Activated T-helper 1 cell treated with anti-CD3 and anti-CD28 coated beads, Interleukin-12 subunit alpha, Interleukin-12 subunit beta, Interleukin-2, Interleukin-4 antibody, amounts not matched to agents 30 ng/mL and 10 ng/mL and 1 ng/mL, durations not matched to agents 14 hours and 24 hours and 36 hours (primary cell): ENCODE measurements at regions of chr11 and their contacts with region 1.

Region 1: DNA sequence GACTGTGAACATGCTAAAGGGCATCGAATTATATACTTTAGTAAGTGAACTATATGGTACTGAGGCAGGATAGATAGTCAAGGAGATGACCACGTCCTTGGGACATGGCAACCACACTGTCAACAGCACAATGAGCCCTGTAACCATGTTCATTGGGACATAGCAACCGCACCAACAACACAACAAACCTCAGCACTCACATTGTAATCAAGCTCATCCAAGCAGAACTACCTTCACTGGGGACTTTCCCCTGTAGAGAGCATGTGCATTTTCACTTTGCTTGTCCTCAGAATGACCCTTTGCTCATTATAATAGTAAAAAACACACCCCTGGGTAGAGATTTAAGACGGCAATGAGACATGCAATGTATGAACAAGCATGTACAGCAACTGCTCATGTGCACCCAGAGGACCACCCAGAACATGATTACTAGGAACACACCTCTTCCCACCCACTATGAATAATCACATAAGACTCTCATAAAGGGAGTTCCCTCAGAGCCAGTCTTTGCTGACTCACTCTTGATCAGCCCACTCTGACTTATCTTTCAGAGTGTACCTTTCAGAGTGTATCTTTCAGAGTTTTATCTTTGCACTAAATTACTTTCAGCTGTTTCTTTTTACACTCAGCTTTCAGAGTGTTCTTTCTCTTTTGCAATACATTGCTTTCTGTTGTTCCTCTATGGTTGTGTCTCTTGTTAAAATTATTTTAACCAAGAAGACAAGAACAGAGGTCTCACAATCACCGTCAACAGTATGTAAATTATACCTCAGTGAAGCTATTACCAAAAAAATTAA is 4.1 kb upstream of the PLAAT2 start:
- DNase-seq: peak; percentile 77
- H3K4me3 Mint-ChIP-seq: peak overlapping the region; percentile 50
- H3K27ac Mint-ChIP-seq: peak overlapping the region; percentile 93
- H3K4me1 Mint-ChIP-seq: peaks cover 36% of the 10 kb centered on the region
- H3K27me3 Mint-ChIP-seq: peaks cover 6% of the 10 kb centered on the region

Region 2: GRCh38 chr11:63536669-63537292 is 30.5 kb before region 1 on chr11 and contains the start of gene PLAAT4:
- intact Hi-C with region 1: loop called (anchors 1 kb)
- DNase-seq: peak; percentile 41
- H3K4me3 Mint-ChIP-seq: peak within 1 kb of the TSS; percentile 86
- H3K27ac Mint-ChIP-seq: peak within 1 kb of the TSS; percentile 91
- H3K4me1 Mint-ChIP-seq: peaks cover 69% of the 10 kb centered on the region
- H3K27me3 Mint-ChIP-seq: no peaks in the 10 kb centered on the region
- total RNA-seq, gene PLAAT4: 11.8 and 12.2 TPM in 2 replicates

Region 3: DNA sequence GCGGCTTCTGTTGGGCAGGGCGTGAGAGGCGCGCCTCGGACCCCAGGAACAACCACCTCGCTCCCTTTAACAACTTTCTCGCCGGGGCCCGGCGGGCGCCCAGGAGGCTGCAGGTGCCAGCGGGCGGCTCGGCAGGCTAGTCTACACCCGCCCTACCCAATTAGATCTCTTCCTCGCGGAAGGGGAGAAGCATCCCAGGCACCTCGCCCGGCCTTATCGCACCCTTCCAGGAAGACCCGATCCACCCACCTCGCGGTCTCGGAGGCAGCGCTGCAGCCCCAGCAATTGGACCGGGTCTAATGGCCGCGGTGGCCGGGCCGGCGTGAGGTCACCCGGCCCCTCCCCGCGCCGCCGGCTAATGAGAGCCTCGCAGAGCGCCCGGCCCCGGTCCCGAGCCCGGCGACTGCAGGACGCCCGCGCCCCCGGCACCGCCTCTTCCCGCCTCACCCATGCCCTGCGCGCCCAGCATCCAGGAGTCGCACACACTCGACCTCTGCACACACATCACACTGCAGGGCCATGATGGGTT is 47.0 kb after region 1 on chr11 and contains the start of gene PLAAT3:
- intact Hi-C with region 1: loop called (anchors 5 kb)
- DNase-seq: peak; percentile 14
- H3K4me3 Mint-ChIP-seq: peak within 1 kb of the TSS; percentile 81
- H3K27ac Mint-ChIP-seq: no peak within 1 kb of the TSS
- H3K4me1 Mint-ChIP-seq: peaks cover 5% of the 10 kb centered on the region
- H3K27me3 Mint-ChIP-seq: peaks cover 7% of the 10 kb centered on the region
- total RNA-seq, gene PLAAT3: 2.3 TPM in 2 replicates

Region 4: GRCh38 chr11:63681321-63682049 is 114.2 kb after region 1 on chr11 and contains the start of gene RTN3:
- intact Hi-C with region 1: loop called (anchors 5 kb)
- DNase-seq: peak; percentile 100
- H3K4me3 Mint-ChIP-seq: peak within 1 kb of the TSS; percentile 91
- H3K27ac Mint-ChIP-seq: peak within 1 kb of the TSS; percentile 91
- H3K4me1 Mint-ChIP-seq: peaks cover 32% of the 10 kb centered on the region
- H3K27me3 Mint-ChIP-seq: peaks cover 11% of the 10 kb centered on the region
- total RNA-seq, gene RTN3: 52.1 and 54.7 TPM in 2 replicates

Region 5: DNA sequence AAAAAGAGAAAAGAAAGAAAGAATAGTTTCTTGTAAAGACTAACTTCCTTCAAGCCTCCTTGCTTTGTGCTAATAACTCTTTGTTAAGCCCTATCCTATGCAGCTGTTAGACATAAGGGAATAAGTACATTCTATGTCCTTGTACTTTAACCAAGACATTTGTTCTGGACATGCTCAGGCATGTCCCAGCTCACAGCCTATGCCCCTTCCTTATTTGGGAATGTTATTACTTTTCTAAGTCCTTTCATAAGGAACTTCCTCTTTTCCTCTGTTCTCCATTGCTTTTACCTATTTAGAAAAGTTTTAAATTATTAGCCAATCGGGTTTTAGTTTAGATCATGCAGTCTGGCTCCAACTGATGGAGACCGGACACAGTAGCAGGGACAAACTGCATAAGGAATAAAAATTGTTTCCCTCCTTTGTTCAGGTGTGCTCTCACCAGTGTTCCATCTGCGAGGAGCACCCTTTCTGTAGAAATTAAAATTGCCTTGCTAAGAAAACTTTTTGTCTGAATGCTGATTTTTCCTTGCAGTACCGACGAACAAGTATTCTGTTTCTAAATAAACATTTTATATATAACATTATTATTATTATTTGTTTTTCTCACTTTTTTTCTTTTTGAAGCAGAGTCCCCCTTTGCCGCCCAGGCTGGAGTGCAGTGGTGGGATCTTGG is 224.4 kb after region 1 on chr11:
- intact Hi-C with region 1: no loop called
- DNase-seq: no peak
- H3K4me3 Mint-ChIP-seq: no peak overlapping the region
- H3K27ac Mint-ChIP-seq: no peak overlapping the region
- H3K4me1 Mint-ChIP-seq: no peaks in the 10 kb centered on the region
- H3K27me3 Mint-ChIP-seq: peaks cover 4% of the 10 kb centered on the region